Activated CD4-positive, alpha-beta T cell treated with anti-CD3 and anti-CD28 coated beads for 36 hours (primary cell): ENCODE measurements at regions of chr5 and their contacts with region 1.

Region 1: DNA sequence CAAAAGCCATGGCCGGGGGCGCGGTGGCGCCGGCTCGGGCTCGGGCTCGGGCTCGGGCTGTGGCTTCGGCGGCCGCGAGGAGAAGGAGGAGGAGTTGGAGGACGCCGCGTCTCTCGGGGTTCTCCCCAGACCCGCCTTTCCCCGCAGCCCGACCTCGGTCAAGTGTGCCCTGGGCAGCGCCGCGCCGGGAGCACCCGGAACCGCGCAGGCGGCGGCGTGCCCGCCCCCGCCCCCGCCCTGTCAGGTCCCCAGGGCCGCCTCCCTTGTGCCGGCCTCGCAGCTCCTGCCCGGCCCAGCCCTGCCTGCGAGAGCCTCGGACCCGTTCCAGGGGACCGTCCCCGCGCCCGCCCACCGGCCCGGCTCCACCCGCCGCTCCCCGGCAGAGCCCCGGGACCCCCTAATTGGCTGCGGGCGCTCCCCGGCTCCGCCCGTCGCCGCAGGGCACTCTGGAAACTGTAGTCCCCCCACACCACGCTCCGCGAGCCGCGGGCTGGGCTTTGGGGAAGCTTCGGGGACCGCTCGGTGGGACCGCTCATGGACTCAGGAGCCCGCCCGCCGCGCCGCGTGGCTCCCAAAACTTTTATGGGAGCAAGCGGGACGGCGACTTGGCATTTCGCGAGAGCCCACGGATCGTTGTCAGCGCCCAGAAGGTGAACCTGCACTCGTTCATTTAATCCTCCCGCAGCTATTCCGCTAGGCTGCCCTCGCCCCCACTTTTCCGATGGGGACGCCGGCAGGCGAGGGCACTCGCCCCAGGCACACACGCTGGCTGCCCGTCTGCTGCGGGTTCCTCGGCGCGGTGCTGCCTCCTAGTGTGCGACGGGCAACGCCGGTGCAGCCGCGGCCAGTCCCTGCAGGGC is at the start of gene STK10:
- DNase-seq: peak; percentile 94
- ATAC-seq: peak; percentile 72
- H3K4me3 Mint-ChIP-seq: peak within 1 kb of the TSS; percentile 95
- H3K27ac Mint-ChIP-seq: peak within 1 kb of the TSS; percentile 98
- H3K4me1 Mint-ChIP-seq: peaks cover 28% of the 10 kb centered on the region
- H3K27me3 Mint-ChIP-seq: no peaks in the 10 kb centered on the region
- total RNA-seq, gene STK10: 83.1 to 144 TPM

Region 2: DNA sequence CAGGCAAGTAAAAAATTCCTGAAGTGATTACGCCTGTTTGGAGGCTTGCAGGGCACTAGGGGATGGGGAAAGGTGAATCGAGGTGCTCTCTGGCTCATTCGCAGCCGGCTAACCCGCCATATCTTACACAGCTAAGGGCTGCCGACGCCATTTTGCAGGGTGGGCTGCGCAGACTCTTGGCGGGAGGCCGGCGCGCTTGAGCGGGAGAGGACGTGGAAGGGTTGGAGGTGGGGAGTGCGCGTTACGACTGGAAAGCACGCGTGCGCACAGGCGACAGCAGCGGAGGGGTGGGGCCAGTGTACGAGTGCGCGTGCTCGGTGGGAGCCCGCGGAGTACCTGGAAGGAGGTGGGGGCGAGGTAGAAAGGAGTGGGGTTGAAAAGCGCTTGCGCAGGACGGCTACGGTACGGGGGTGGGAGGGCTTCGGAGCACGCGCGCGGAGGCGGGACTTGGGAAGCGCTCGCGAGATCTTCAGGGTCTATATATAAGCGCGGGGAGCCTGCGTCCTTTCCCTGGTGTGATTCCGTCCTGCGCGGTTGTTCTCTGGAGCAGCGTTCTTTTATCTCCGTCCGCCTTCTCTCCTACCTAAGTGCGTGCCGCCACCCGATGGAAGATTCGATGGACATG is 800.8 kb before region 1 on chr5 and contains the start of gene NPM1:
- CTCF ChIA-PET with region 1: no interaction called
- POLR2A ChIA-PET with region 1: no interaction called
- intact Hi-C with region 1: loop called in 1 of 2 experiments (anchors 1 kb)
- DNase-seq: peak; percentile 99
- ATAC-seq: peak; percentile 83
- H3K4me3 Mint-ChIP-seq: peak within 1 kb of the TSS; percentile 88
- H3K27ac Mint-ChIP-seq: peak within 1 kb of the TSS; percentile 99
- H3K4me1 Mint-ChIP-seq: peaks cover 37% of the 10 kb centered on the region
- H3K27me3 Mint-ChIP-seq: no peaks in the 10 kb centered on the region
- total RNA-seq, gene NPM1: 3,156 to 3,905 TPM

Region 3: GRCh38 chr5:171757853-171758535 is 430.3 kb before region 1 on chr5:
- CTCF ChIA-PET with region 1: no interaction called
- POLR2A ChIA-PET with region 1: no interaction called
- intact Hi-C with region 1: no loop called
- DNase-seq: no peak
- ATAC-seq: peak; percentile 98
- H3K4me3 Mint-ChIP-seq: no peak overlapping the region
- H3K27ac Mint-ChIP-seq: no peak overlapping the region
- H3K4me1 Mint-ChIP-seq: peaks cover 17% of the 10 kb centered on the region
- H3K27me3 Mint-ChIP-seq: no peaks in the 10 kb centered on the region

Region 4: GRCh38 chr5:171961117-171961516 is 227.1 kb before region 1 on chr5:
- CTCF ChIA-PET with region 1: interaction called, 3 read pairs
- POLR2A ChIA-PET with region 1: no interaction called
- intact Hi-C with region 1: loop called in 1 of 2 experiments (anchors 5 kb)
- DNase-seq: peak; percentile 65
- ATAC-seq: peak; percentile 64
- H3K4me3 Mint-ChIP-seq: no peak overlapping the region
- H3K27ac Mint-ChIP-seq: peak overlapping the region; percentile 72
- H3K4me1 Mint-ChIP-seq: peaks cover 92% of the 10 kb centered on the region
- H3K27me3 Mint-ChIP-seq: no peaks in the 10 kb centered on the region

Region 5: GRCh38 chr5:171999877-172000276 is 188.4 kb before region 1 on chr5:
- CTCF ChIA-PET with region 1: no interaction called
- POLR2A ChIA-PET with region 1: no interaction called
- intact Hi-C with region 1: no loop called
- DNase-seq: no peak
- ATAC-seq: no peak
- H3K4me3 Mint-ChIP-seq: no peak overlapping the region
- H3K27ac Mint-ChIP-seq: no peak overlapping the region
- H3K4me1 Mint-ChIP-seq: peaks cover 69% of the 10 kb centered on the region
- H3K27me3 Mint-ChIP-seq: no peaks in the 10 kb centered on the region

Region 6: DNA sequence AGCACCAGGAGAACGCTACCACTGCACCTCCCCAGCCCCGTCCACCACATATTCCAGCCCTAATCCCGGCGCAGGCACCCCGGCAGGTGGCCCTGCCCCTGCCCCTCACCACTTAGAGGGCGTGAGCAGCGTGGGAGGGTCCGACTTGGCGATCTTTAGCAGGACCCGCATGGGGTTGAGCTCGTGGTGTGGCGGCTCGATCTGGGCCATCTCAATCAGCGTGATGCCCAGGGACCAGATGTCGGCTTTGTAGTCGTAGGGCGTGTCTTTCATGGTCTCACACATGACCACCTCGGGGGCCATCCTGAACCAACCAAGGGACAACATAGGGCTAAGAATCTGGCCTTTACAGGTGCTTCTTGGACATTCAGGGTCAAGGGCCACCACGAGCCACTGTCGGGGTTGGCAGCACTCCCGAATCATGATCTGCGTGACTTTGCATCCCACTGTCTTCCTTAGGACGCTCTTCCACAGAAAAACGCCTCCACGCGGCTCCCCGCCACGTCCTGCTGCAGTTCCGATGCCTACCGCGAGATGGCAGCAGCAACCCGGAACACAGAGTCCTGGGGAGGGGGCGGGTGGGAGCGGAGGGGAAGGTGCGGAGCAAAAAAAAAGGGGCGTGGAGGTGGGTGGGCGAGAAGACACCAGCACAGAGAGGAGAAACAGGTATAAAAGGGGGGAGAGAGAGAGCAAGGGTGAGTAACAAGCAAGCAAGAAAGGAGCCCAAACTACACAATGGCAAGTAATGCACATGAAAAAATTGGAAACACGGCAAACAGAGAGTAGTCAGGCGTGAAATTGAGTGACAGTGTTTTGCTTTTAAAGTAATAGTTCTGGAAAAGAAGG is 81.5 kb before region 1 on chr5:
- CTCF ChIA-PET with region 1: interaction called, 51 read pairs
- POLR2A ChIA-PET with region 1: interaction called, 15 read pairs
- intact Hi-C with region 1: loop called (anchors 1 kb)
- DNase-seq: peak; percentile 79
- ATAC-seq: no peak
- H3K4me3 Mint-ChIP-seq: no peak overlapping the region
- H3K27ac Mint-ChIP-seq: peak overlapping the region; percentile 73
- H3K4me1 Mint-ChIP-seq: peaks cover 61% of the 10 kb centered on the region
- H3K27me3 Mint-ChIP-seq: no peaks in the 10 kb centered on the region

Region 7: DNA sequence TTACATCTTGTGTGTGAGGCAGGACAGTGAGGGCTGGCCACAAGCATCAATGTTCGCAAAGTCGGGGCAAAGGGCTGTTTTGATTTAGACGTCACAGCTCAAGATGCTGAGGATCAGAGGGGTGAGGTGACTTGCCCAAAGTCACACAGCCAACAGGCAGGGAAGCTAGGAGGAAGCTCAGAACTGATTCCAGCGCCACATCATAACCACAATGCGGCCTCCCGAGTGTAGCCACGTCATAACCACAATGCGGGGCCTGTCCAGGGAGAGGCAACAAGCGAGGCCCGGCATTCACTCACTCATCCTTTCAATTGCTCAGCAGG is 14.5 kb before region 1 on chr5:
- CTCF ChIA-PET with region 1: interaction called, 83 read pairs
- POLR2A ChIA-PET with region 1: interaction called, 64 read pairs
- intact Hi-C with region 1: loop called (anchors 1 kb)
- DNase-seq: peak; percentile 91
- ATAC-seq: peak; percentile 20
- H3K4me3 Mint-ChIP-seq: peak overlapping the region; percentile 75
- H3K27ac Mint-ChIP-seq: peak overlapping the region; percentile 99
- H3K4me1 Mint-ChIP-seq: peaks cover 96% of the 10 kb centered on the region
- H3K27me3 Mint-ChIP-seq: no peaks in the 10 kb centered on the region

Region 8: GRCh38 chr5:172274921-172275753 is 86.9 kb after region 1 on chr5:
- CTCF ChIA-PET with region 1: interaction called, 3 read pairs
- POLR2A ChIA-PET with region 1: no interaction called
- intact Hi-C with region 1: loop called in 1 of 2 experiments (anchors 2 kb)
- DNase-seq: peak; percentile 77
- ATAC-seq: peak; percentile 92
- H3K4me3 Mint-ChIP-seq: no peak overlapping the region
- H3K27ac Mint-ChIP-seq: peak overlapping the region; percentile 40
- H3K4me1 Mint-ChIP-seq: peaks cover 43% of the 10 kb centered on the region
- H3K27me3 Mint-ChIP-seq: no peaks in the 10 kb centered on the region